ENCODE measurements at regions of chr19 and their contacts with region 1.

Region 1: DNA sequence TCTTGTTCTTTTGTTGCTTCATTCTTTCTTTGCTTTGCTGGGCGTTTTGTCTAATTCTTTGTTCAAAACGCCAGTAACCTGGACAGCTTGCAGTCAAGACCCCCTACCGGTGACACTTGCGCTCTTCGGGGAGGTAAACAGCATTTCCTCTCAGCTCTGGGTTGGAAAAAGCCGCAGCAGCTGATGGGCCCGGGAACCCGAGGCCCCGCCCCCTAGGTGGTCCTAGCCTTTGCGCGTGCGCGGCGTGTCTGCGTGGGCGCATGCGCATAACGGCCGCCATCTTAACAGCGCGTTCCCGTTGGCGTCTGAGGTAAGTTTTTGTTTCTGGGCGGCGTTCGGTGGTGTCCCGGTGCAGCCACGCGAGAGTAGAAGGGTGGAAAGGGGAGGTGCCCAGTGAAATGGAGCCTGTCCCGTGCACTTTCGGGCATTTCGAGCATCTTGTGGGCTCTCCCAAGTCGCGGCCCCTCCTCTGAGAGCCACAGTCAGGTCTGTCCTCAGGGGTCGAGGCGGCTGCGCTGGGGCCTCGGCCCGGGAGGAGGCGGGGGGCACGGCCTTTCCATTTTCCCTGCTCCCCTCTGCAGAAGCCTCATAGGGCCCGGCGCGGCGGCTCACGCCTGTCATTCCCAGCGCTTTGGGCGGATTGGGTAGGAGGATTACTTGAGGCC is at the start of gene ZNF559:
- DNase-seq: peak; percentile 92
- ATAC-seq: peak; percentile 98
- H3K4me3 ChIP-seq: peak within 1 kb of the TSS; percentile 66
- H3K27ac ChIP-seq: peak within 1 kb of the TSS; percentile 54
- H3K4me1 ChIP-seq: 0 out of 2 replicates have a peak, but pooled peaks cover 2% of the 10 kb centered on the region
- H3K27me3 ChIP-seq: no peaks in the 10 kb centered on the region
- CTCF ChIP-seq: peak; percentile 33
- POLR2A ChIP-seq: 0 out of 2 replicates have a peak, but pooled peaks have one; percentile 26
- RAD21 ChIP-seq: no peak
- total RNA-seq, gene ZNF559: 8.8 and 9.4 TPM in 2 replicates

Region 2: GRCh38 chr19:9309139-9309973 is 14.7 kb before region 1 on chr19 and contains the start of gene ZNF699:
- CTCF ChIA-PET with region 1: no interaction called
- POLR2A ChIA-PET with region 1: no interaction called
- dilution Hi-C with region 1: no loop called
- in situ Hi-C with region 1: no loop called
- intact Hi-C with region 1: loop called (anchors 1 kb)
- DNase-seq: peak; percentile 96
- ATAC-seq: peak; percentile 92
- H3K4me3 ChIP-seq: peak within 1 kb of the TSS; percentile 94
- H3K27ac ChIP-seq: peak within 1 kb of the TSS; percentile 86
- H3K4me1 ChIP-seq: 0 out of 2 replicates have a peak, but pooled peaks cover 2% of the 10 kb centered on the region
- H3K27me3 ChIP-seq: no peaks in the 10 kb centered on the region
- CTCF ChIP-seq: no peak
- POLR2A ChIP-seq: peak; percentile 81
- RAD21 ChIP-seq: no peak
- total RNA-seq, gene ZNF699: 7.2 and 7.3 TPM in 2 replicates

Measured in IMR-90 (cell line).